Head of caudate nucleus (tissue), 42 donors: ENCODE measurements at regions of chr6 and their contacts with region 1.

Region 1: DNA sequence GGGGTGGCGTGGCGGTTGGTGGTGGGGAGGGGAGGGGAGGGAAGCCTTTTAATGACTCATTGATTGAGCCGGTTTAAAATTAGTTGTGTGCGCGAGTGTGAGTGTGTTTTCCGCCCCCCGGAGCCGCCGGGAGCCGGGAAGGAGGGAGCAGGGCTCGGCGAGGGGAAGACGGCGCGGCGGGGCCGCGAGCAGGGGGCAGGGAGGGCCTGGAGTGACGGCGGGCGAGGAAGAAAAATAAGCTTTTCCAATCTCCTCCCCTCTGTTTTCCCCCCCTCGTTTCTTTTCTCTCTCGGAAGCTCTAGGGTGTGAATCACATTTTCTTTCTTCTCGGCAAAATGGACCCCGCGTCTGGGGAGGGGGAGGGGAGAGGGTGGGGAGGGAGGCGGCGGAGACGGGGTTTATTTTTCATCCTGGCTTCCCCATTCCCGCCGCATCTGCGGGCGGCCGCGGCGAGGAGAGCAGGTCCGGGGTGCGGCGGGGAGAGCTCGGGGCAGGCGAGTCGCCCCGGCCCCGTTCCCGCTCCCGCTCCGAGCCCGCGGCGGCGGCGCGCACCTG is 847 bp downstream of the BICRAL start:
- DNase-seq: peak; percentile 56 to 95 (median 84)

Region 2: DNA sequence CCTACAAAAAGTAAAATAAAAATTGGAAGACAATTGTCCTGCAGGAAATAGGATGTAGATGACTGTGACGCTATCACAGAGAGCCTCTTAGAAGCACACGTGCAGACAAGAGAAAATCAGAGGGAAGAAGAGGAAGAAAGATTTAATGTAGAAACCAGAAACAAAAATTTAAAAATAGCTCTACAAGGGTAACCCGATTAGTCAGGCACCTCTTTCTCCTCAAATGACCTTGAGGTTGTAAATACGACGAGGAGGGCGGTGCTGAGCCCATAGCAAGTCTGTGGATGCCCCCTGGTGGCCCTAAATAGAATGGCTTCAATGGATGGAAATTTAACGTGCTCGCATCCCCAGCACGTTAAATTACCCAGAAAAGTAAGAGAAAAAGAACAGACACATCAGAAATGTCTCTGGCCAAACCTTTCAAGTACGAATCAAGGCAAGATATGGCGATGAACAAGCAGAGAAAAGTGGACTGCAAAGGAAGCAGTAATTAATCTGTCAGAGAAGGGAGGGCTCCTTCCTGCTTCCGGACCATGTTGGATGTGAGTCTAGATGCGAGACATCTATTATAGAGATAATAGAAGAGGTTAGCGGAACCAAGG is 56.1 kb before region 1 on chr6:
- intact Hi-C with region 1: loop called (anchors 10 kb)
- DNase-seq: peak; percentile 42 to 94 (median 79)

Region 3: GRCh38 chr6:42745707-42746462 is 36.8 kb before region 1 on chr6 and contains the start of gene TBCC:
- intact Hi-C with region 1: loop called (anchors 2 kb)
- DNase-seq: peak; percentile 90 to 99 (median 98)

Region 4: DNA sequence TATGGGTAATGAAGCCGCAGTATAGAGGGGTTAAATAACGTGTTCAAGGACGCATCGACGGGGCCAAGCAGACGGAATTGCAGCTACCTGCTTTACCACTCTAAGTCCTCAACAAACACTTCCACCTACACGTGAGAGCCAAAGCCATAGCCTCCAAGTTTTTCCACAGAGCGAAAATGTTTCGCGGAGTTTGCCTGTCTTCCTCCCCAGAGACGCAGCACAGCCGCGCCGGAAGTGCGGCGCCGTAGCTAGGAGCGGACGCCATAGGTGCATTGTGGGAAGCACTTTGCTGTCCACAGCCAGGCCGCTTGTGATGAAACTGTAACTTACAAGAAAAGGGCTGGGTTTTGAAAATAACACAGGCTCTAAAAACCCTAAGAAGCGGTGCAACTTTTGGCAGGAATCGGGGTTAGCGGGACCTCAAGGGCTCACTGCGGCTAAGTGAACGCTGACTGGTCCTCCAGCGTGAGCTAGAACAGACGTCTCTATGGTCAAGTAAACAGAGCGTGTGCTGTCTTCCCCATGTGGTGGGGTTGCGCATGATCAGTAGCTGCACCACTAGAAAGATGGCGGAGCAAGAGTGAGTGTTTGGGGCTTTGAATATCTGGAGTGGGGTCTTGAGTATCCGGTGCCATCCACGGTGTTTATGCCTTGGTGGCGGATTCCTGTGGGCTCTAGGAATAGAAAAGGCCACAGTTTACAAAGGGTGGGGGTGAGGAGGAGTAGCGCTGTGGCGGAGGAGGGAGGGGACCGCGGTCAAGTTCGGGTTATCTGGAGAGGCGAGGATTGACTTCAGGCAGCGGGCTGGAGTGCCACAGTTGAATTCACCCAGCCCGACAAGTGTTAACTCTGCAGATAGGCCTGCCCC is 96.9 kb after region 1 on chr6 and contains the start of gene RPL7L1:
- intact Hi-C with region 1: loop called (anchors 5 kb)
- DNase-seq: peak; percentile 83 to 95 (median 90)

Region 5: GRCh38 chr6:43113431-43114260 is 330.9 kb after region 1 on chr6:
- intact Hi-C with region 1: no loop called
- DNase-seq: no peak